ENCODE measurements at regions of chr16 and their contacts with region 1.

Region 1: DNA sequence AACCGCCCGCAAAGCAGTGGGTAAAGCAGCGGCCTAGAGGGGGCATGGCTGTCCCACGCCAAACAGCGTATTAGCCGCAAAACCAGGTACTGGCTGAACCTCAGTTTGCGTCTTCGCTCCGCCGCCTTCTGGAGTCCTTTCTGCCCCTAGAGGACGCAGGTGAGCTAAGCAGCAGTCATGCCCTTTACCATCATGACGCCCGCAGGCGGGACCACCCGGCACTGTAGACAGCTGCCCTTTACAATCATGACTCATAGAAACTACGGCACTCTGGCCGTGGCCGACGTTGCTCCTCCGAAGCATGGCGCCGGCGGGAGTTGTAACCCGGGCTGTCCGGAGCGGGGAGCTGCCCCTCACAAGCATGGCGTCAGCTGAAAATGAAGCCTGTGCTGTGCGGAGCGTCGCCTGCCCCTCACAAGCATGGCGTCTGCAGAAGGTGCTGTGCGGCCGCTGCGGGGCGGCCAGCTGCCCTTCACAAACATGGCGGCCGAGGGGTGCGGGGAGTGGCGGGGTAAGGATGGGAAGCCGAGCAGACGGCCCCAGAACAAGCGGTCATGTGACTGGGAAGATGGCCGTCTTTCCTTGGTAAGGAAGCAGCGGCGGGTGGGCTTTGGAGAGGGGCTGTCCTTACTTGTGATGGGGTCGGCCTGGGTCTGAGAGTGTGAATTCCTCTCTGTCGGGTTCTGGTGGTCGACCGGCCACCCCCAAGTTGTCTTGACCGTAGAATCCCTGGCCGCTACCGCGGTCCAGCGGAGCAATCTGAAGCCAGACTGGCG is at the start of gene VPS35L:
- DNase-seq: peak; percentile 90
- H3K4me3 ChIP-seq: peak within 1 kb of the TSS; percentile 91
- CTCF ChIP-seq: peak; percentile 84

Region 2: GRCh38 chr16:19521471-19522396 is 33.6 kb before region 1 on chr16 and contains the start of gene GDE1:
- CTCF ChIA-PET with region 1: interaction called, 11 read pairs
- POLR2A ChIA-PET with region 1: interaction called, 3 read pairs
- DNase-seq: no peak
- H3K4me3 ChIP-seq: peak within 1 kb of the TSS; percentile 95
- CTCF ChIP-seq: peak; percentile 70

Region 3: GRCh38 chr16:19542138-19542821 is 13.1 kb before region 1 on chr16:
- CTCF ChIA-PET with region 1: interaction called, 16 read pairs
- POLR2A ChIA-PET with region 1: interaction called, 3 read pairs
- DNase-seq: no peak
- H3K4me3 ChIP-seq: no peak overlapping the region
- CTCF ChIP-seq: no peak

Region 4: GRCh38 chr16:19583665-19584300 is 28.4 kb after region 1 on chr16:
- CTCF ChIA-PET with region 1: interaction called, 24 read pairs
- POLR2A ChIA-PET with region 1: interaction called, 4 read pairs
- DNase-seq: no peak
- H3K4me3 ChIP-seq: no peak overlapping the region
- CTCF ChIP-seq: peak; percentile 82